ENCODE measurements at regions of chr10 and their contacts with region 1.

Region 1: GRCh38 chr10:118046395-118047156 is at the start of gene RAB11FIP2:
- DNase-seq: peak; percentile 86 to 92 (median 89)
- ATAC-seq: peak; percentile 91
- H3K4me3 ChIP-seq: peak within 1 kb of the TSS; percentile 72
- H3K27ac ChIP-seq: peak within 1 kb of the TSS; percentile 89
- H3K4me1 ChIP-seq: peaks cover 3 to 10% of the 10 kb centered on the region in 2 experiments; a peak in 4 of 5 replicates
- H3K27me3 ChIP-seq: no peaks in the 10 kb centered on the region
- CTCF ChIP-seq: peak in 2 of 3 experiments; percentile 7 to 9; a peak in 1 of 6 replicates
- EP300 ChIP-seq: no peak
- POLR2A ChIP-seq: peak; percentile 60
- RAD21 ChIP-seq: no peak
- polyA plus RNA-seq, gene RAB11FIP2: 3.0 to 3.9 TPM

Region 2: GRCh38 chr10:117699436-117700075 is 347.0 kb before region 1 on chr10:
- CTCF ChIA-PET with region 1: no interaction called
- POLR2A ChIA-PET with region 1: no interaction called
- in situ Hi-C with region 1: no loop called
- intact Hi-C with region 1: no loop called
- DNase-seq: no peak
- ATAC-seq: no peak
- H3K4me3 ChIP-seq: no peak overlapping the region
- H3K27ac ChIP-seq: no peak overlapping the region
- H3K4me1 ChIP-seq: no peaks in the 10 kb centered on the region
- H3K27me3 ChIP-seq: no peaks in the 10 kb centered on the region; a peak in 2 of 5 replicates
- CTCF ChIP-seq: no peak
- EP300 ChIP-seq: no peak
- POLR2A ChIP-seq: no peak
- RAD21 ChIP-seq: no peak

Region 3: DNA sequence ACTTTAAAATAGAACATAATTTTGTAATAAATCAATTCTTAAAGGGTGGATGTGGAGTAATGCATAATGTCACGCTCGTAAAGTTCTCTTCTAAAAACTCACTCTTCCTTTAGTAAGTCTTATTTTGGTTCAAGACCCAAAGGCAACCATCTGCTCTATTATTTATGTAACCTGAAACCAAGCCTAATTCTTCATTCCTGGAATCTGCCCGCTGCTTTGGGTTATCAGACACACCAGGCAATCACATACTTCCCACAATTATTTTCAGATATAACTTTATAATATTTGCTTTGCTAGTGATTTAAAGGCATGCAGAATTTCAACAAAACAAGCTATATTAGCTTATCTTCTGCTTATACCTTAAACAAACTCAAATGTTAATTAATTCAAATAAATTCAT is 38.8 kb before region 1 on chr10:
- CTCF ChIA-PET with region 1: no interaction called
- POLR2A ChIA-PET with region 1: interaction called, 3 read pairs
- in situ Hi-C with region 1: no loop called
- intact Hi-C with region 1: loop called (anchors 5 kb)
- DNase-seq: peak in 1 of 4 experiments; percentile 7
- ATAC-seq: no peak
- H3K4me3 ChIP-seq: no peak overlapping the region
- H3K27ac ChIP-seq: no peak overlapping the region
- H3K4me1 ChIP-seq: peaks cover 0 to 4% of the 10 kb centered on the region in 2 experiments; a peak in 1 of 5 replicates
- H3K27me3 ChIP-seq: no peaks in the 10 kb centered on the region
- CTCF ChIP-seq: no peak
- EP300 ChIP-seq: no peak; the same call in 1 of the 2 replicates
- POLR2A ChIP-seq: no peak
- RAD21 ChIP-seq: no peak

Region 4: GRCh38 chr10:118035354-118036005 is 11.1 kb before region 1 on chr10:
- CTCF ChIA-PET with region 1: no interaction called
- POLR2A ChIA-PET with region 1: no interaction called
- in situ Hi-C with region 1: no loop called
- intact Hi-C with region 1: no loop called
- DNase-seq: no peak
- ATAC-seq: no peak
- H3K4me3 ChIP-seq: no peak overlapping the region
- H3K27ac ChIP-seq: no peak overlapping the region
- H3K4me1 ChIP-seq: no peaks in the 10 kb centered on the region
- H3K27me3 ChIP-seq: no peaks in the 10 kb centered on the region
- CTCF ChIP-seq: no peak
- EP300 ChIP-seq: no peak
- POLR2A ChIP-seq: no peak
- RAD21 ChIP-seq: no peak

Region 5: GRCh38 chr10:118173296-118173695 is 126.7 kb after region 1 on chr10:
- CTCF ChIA-PET with region 1: no interaction called
- POLR2A ChIA-PET with region 1: no interaction called
- in situ Hi-C with region 1: no loop called
- intact Hi-C with region 1: no loop called
- DNase-seq: no peak
- ATAC-seq: no peak
- H3K4me3 ChIP-seq: no peak overlapping the region
- H3K27ac ChIP-seq: no peak overlapping the region
- H3K4me1 ChIP-seq: no peaks in the 10 kb centered on the region
- H3K27me3 ChIP-seq: no peaks in the 10 kb centered on the region
- CTCF ChIP-seq: no peak
- EP300 ChIP-seq: no peak
- POLR2A ChIP-seq: no peak
- RAD21 ChIP-seq: no peak

Measured in K562 (cell line).